SK-N-SH (cell line): ENCODE measurements at regions of chr15 and their contacts with region 1.

Region 1: GRCh38 chr15:37793851-37794250 is 140.6 kb upstream of the TMCO5A start:
- DNase-seq: peak; percentile 60
- H3K4me3 ChIP-seq: no peak overlapping the region
- H3K27ac ChIP-seq: peak overlapping the region in 1 of 2 experiments; percentile 99; a peak in 2 of 4 replicates
- H3K4me1 ChIP-seq: peaks cover 15 to 32% of the 10 kb centered on the region in 2 experiments; a peak in 2 of 4 replicates
- H3K27me3 ChIP-seq: no peaks in the 10 kb centered on the region
- CTCF ChIP-seq: peak; percentile 64
- EP300 ChIP-seq: no peak; a peak in 1 of 4 replicates
- RAD21 ChIP-seq: peak; percentile 93

Region 2: DNA sequence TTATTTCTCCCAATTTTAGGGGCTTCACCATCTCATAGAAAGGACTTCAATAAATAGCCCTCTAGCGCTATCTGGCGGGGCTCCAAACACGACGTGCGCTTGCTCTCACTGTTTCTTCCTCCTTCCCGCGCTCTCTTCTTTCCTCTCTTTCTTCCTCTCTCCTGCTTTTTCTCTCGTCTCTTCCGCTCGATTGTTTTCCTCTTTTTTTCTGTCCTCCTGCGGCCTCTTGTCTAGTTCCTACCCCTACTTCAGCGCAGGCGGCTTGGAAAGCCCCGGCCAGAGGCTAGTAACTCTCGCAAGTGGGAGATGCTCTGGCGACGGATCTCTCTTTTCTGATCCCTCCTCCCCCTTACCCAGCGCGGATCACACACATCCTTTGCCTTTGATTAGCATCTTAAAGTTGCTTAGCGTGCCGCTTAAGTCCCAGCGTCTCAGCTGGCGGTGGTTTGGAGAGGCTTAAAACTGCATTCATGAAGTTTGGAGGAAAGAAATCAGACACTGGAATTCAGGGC is 687.3 kb before region 1 on chr15:
- CTCF ChIA-PET with region 1: interaction called, 11 read pairs
- POLR2A ChIA-PET with region 1: interaction called, 11 read pairs
- DNase-seq: no peak
- H3K4me3 ChIP-seq: peak overlapping the region; percentile 74 to 92
- H3K27ac ChIP-seq: peak overlapping the region; percentile 99
- H3K4me1 ChIP-seq: peaks cover 2 to 10% of the 10 kb centered on the region in 2 experiments; a peak in 2 of 4 replicates
- H3K27me3 ChIP-seq: no peaks in the 10 kb centered on the region
- CTCF ChIP-seq: peak; percentile 61
- EP300 ChIP-seq: no peak
- RAD21 ChIP-seq: peak; percentile 61

Region 3: DNA sequence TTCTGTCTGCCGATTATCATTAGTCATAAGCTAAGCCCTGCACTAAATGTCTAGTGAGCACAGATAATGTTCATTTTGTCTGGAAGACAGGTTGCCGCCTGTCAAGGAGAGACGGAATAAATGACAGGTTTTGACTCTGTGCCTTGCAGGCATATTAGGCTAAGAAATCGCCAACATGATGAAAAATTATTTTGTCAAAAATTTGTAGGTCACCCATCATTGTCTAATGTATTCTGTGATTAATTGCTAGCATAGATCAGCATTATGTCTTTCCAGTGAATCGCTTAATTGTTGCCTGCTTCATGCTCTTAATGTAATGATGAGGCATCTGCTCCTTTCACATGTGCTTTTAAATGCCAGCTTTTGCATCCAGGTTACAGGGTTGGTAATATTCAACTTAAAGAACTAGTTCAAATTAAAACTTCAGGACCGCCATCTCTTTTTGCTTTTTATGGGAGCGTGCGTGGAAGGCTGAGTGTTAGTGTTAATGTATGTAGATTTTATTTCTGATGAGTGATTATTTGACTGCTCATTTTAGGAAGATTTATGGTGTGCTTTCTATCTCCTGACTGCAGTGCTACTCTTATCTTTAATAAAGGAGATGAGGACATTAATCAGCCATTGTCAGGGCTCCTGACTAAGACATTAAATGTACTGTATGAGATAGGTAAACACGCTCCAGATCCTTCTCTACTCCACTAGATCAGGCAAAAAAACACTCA is 572.7 kb before region 1 on chr15:
- CTCF ChIA-PET with region 1: interaction called, 42 read pairs
- POLR2A ChIA-PET with region 1: interaction called, 14 read pairs
- DNase-seq: peak; percentile 18
- H3K4me3 ChIP-seq: peak overlapping the region; percentile 11 to 35; a peak in 2 of 4 replicates
- H3K27ac ChIP-seq: peak overlapping the region; percentile 36 to 100; a peak in 3 of 4 replicates
- H3K4me1 ChIP-seq: peaks cover 3 to 40% of the 10 kb centered on the region in 2 experiments; a peak in 2 of 4 replicates
- H3K27me3 ChIP-seq: no peaks in the 10 kb centered on the region
- CTCF ChIP-seq: no peak
- EP300 ChIP-seq: peak; percentile 19 to 97
- RAD21 ChIP-seq: peak; percentile 12; the same call in 1 of the 2 replicates

Region 4: DNA sequence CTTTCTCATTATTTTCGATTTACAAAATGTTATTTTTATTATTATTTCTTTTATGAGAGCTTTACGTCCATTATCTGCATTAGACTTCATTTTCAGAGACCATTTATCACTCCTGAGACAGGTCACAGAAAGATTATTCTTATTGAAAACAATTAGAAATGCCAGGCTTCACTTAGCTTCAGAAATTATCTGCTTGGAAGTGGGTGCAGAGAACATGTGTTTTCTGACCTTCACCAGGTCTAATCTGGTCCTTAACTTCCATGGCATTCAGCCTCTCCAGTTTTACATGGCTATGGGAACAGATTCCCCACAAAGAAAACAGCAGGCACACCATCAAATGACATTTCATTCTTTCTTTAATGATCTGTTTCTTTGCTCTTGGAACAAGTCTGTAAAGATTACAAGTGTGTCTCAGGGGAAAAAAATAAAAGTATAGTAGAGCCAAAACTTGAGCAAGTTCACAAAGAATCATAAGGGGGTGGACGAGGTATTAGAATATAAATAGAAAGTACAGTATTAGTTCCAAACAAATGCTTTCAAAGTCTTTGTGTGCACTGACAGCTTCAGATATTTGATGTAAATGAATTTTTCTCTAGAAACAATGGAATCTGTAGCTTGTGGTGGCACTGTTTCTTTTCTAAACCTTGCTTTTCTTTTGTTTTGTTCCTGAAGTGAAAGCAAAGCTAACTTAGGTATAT is 399.3 kb before region 1 on chr15:
- CTCF ChIA-PET with region 1: interaction called, 26 read pairs
- POLR2A ChIA-PET with region 1: no interaction called
- DNase-seq: peak; percentile 19
- H3K4me3 ChIP-seq: no peak overlapping the region
- H3K27ac ChIP-seq: peak overlapping the region; percentile 7 to 100; a peak in 3 of 4 replicates
- H3K4me1 ChIP-seq: peaks cover 0 to 43% of the 10 kb centered on the region in 2 experiments; a peak in 2 of 4 replicates
- H3K27me3 ChIP-seq: no peaks in the 10 kb centered on the region
- CTCF ChIP-seq: no peak
- EP300 ChIP-seq: peak in 1 of 2 experiments; percentile 96; a peak in 2 of 4 replicates
- RAD21 ChIP-seq: peak; percentile 46

Region 5: GRCh38 chr15:37503557-37503956 is 290.3 kb before region 1 on chr15:
- CTCF ChIA-PET with region 1: no interaction called
- POLR2A ChIA-PET with region 1: no interaction called
- DNase-seq: no peak
- H3K4me3 ChIP-seq: no peak overlapping the region
- H3K27ac ChIP-seq: no peak overlapping the region
- H3K4me1 ChIP-seq: no peaks in the 10 kb centered on the region
- H3K27me3 ChIP-seq: no peaks in the 10 kb centered on the region
- CTCF ChIP-seq: no peak
- EP300 ChIP-seq: no peak
- RAD21 ChIP-seq: no peak

Region 6: GRCh38 chr15:37743826-37744225 is 50.0 kb before region 1 on chr15:
- CTCF ChIA-PET with region 1: no interaction called
- POLR2A ChIA-PET with region 1: no interaction called
- DNase-seq: no peak
- H3K4me3 ChIP-seq: no peak overlapping the region
- H3K27ac ChIP-seq: no peak overlapping the region
- H3K4me1 ChIP-seq: no peaks in the 10 kb centered on the region; a peak in 1 of 4 replicates
- H3K27me3 ChIP-seq: no peaks in the 10 kb centered on the region
- CTCF ChIP-seq: no peak
- EP300 ChIP-seq: no peak
- RAD21 ChIP-seq: no peak

Region 7: GRCh38 chr15:37872661-37873060 is 78.8 kb after region 1 on chr15:
- CTCF ChIA-PET with region 1: interaction called, 74 read pairs
- POLR2A ChIA-PET with region 1: interaction called, 25 read pairs
- DNase-seq: no peak
- H3K4me3 ChIP-seq: peak overlapping the region; percentile 26 to 46
- H3K27ac ChIP-seq: peak overlapping the region; percentile 36 to 99; a peak in 3 of 4 replicates
- H3K4me1 ChIP-seq: peaks cover 6 to 46% of the 10 kb centered on the region in 2 experiments; a peak in 3 of 4 replicates
- H3K27me3 ChIP-seq: no peaks in the 10 kb centered on the region
- CTCF ChIP-seq: no peak
- EP300 ChIP-seq: 0 out of 4 replicates have a peak, but pooled peaks of 1 of the 2 experiments have one; percentile 35
- RAD21 ChIP-seq: no peak; the same call in 1 of the 2 replicates